PC-9 (cell line): ENCODE measurements at regions of chr16 and their contacts with region 1.

Region 1: DNA sequence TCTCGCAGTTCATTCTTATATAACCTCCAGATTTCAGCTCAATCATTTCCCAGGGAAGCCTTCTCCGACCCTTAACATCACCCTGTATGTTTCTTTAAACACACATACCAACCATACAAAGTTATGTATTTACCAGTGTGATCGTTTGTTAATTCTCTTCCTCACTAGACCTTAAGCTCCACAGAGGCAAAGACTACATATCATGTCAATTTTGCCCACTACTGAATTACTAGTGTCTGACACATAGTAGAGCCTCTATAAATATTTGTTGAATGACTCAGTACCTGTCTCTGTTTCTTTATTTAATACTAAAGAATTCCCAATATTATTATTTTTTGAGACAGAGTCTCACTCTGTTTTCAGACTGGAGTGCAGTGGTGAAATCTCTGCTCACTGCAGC is 137.2 kb downstream of the SHISA9 start:
- DNase-seq: peak in 1 of 2 experiments; percentile 57
- H3K4me3 ChIP-seq: no peak overlapping the region
- H3K27ac ChIP-seq: no peak overlapping the region
- H3K4me1 ChIP-seq: 0 out of 2 replicates have a peak, but pooled peaks cover 4% of the 10 kb centered on the region
- H3K27me3 ChIP-seq: no peaks in the 10 kb centered on the region
- CTCF ChIP-seq: no peak

Region 2: DNA sequence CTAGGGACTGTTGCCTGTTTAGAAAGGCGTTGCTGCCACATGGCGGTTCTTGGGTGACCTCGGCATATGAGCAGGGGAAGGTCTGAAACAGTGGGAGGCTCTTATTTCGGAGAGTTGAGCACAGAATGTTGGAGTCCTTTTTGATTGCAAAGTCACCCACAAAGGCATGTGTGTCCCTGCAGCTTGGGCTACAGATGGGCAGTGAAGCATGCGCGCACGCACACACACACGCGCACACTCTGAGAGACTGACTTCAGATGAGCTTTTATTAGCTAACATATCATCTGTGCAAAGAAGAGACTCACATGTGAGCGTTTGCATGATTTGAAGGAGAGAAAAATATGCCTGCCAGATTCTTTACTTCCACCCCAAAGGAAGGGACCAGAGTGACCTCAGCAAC is 32.7 kb before region 1 on chr16:
- CTCF ChIA-PET with region 1: no interaction called
- POLR2A ChIA-PET with region 1: no interaction called
- intact Hi-C with region 1: no loop called
- DNase-seq: no peak
- H3K4me3 ChIP-seq: no peak overlapping the region
- H3K27ac ChIP-seq: no peak overlapping the region
- H3K4me1 ChIP-seq: no peaks in the 10 kb centered on the region
- H3K27me3 ChIP-seq: no peaks in the 10 kb centered on the region
- CTCF ChIP-seq: no peak

Region 3: GRCh38 chr16:13021996-13022395 is 16.6 kb before region 1 on chr16:
- CTCF ChIA-PET with region 1: interaction called, 11 read pairs
- POLR2A ChIA-PET with region 1: no interaction called
- intact Hi-C with region 1: no loop called
- DNase-seq: peak; percentile 62 to 77
- H3K4me3 ChIP-seq: no peak overlapping the region
- H3K27ac ChIP-seq: 0 out of 2 replicates have a peak overlapping the region, but pooled peaks have one; percentile 14
- H3K4me1 ChIP-seq: peaks cover 18% of the 10 kb centered on the region
- H3K27me3 ChIP-seq: no peaks in the 10 kb centered on the region
- CTCF ChIP-seq: no peak